ENCODE measurements at regions of chr15 and their contacts with region 1.

Region 1: GRCh38 chr15:99704444-99704838 is 28.8 kb downstream of the LYSMD4 start:
- DNase-seq: peak in 1 of 5 donors; percentile 50
- H3K4me3 ChIP-seq: no peak overlapping the region
- H3K27ac ChIP-seq: peak overlapping the region in 1 of 2 donors; percentile 56
- H3K4me1 ChIP-seq: peaks cover 8% of the 10 kb centered on the region
- H3K27me3 ChIP-seq: no peaks in the 10 kb centered on the region
- CTCF ChIP-seq: peak; percentile 30 to 85 (median 81)
- EP300 ChIP-seq: no peak
- POLR2A ChIP-seq: no peak

Region 2: GRCh38 chr15:99282121-99282520 is 422.3 kb before region 1 on chr15:
- intact Hi-C with region 1: loop called in 3 of 4 experiments (anchors 2 to 10 kb)
- DNase-seq: no peak
- H3K4me3 ChIP-seq: no peak overlapping the region
- H3K27ac ChIP-seq: no peak overlapping the region
- H3K4me1 ChIP-seq: no peaks in the 10 kb centered on the region
- H3K27me3 ChIP-seq: no peaks in the 10 kb centered on the region
- CTCF ChIP-seq: no peak
- EP300 ChIP-seq: no peak
- POLR2A ChIP-seq: no peak

Region 3: DNA sequence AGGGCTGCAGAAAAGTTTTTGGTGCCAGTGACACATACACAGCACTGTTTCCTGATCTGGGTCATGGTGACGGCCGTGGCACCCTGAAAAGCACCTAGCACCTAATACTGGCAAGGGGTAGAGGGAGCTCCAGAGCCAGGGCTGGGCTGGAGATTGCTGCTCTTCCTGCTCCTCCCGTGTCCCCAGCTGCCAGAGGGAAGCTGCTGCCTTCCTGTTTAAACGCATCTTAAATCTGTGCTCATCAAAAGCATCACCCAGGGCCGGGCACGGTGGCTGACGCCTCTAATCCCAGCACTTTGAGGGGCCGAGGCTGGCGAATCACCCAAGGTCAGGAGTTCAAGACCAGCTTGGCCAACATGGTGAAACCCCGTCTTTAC is 295.4 kb before region 1 on chr15:
- intact Hi-C with region 1: loop called in 1 of 4 experiments (anchors 10 kb)
- DNase-seq: peak in 3 of 5 donors; percentile 42 to 57 (median 42)
- H3K4me3 ChIP-seq: no peak overlapping the region
- H3K27ac ChIP-seq: peak overlapping the region in 1 of 2 donors; percentile 22
- H3K4me1 ChIP-seq: peaks cover 6% of the 10 kb centered on the region
- H3K27me3 ChIP-seq: no peaks in the 10 kb centered on the region
- CTCF ChIP-seq: no peak
- EP300 ChIP-seq: no peak
- POLR2A ChIP-seq: no peak

Region 4: GRCh38 chr15:99729920-99730319 is 25.5 kb after region 1 on chr15:
- intact Hi-C with region 1: no loop called
- DNase-seq: peak in 4 of 5 donors; percentile 43 to 50 (median 48)
- H3K4me3 ChIP-seq: no peak overlapping the region
- H3K27ac ChIP-seq: no peak overlapping the region
- H3K4me1 ChIP-seq: peaks cover 4% of the 10 kb centered on the region
- H3K27me3 ChIP-seq: no peaks in the 10 kb centered on the region
- CTCF ChIP-seq: peak in 1 of 3 donors; percentile 9
- EP300 ChIP-seq: no peak
- POLR2A ChIP-seq: no peak

Region 5: GRCh38 chr15:100216182-100216581 is 511.7 kb after region 1 on chr15:
- intact Hi-C with region 1: no loop called
- DNase-seq: peak in 3 of 5 donors; percentile 22 to 46 (median 36)
- H3K4me3 ChIP-seq: no peak overlapping the region
- H3K27ac ChIP-seq: no peak overlapping the region
- H3K4me1 ChIP-seq: peaks cover 20% of the 10 kb centered on the region
- H3K27me3 ChIP-seq: no peaks in the 10 kb centered on the region
- CTCF ChIP-seq: no peak
- EP300 ChIP-seq: no peak
- POLR2A ChIP-seq: no peak